Activated naive CD4-positive, alpha-beta T cell treated with anti-CD3 and anti-CD28 coated beads for 36 hours (primary cell): ENCODE measurements at regions of chr14 and their contacts with region 1.

Region 1: GRCh38 chr14:22556990-22557623 is 31.9 kb downstream of the DAD1 start:
- DNase-seq: peak; percentile 95
- H3K4me3 Mint-ChIP-seq: peak overlapping the region; percentile 74
- H3K27ac Mint-ChIP-seq: peak overlapping the region; percentile 97
- H3K4me1 Mint-ChIP-seq: peaks cover 84% of the 10 kb centered on the region
- H3K27me3 Mint-ChIP-seq: no peaks in the 10 kb centered on the region

Region 2: DNA sequence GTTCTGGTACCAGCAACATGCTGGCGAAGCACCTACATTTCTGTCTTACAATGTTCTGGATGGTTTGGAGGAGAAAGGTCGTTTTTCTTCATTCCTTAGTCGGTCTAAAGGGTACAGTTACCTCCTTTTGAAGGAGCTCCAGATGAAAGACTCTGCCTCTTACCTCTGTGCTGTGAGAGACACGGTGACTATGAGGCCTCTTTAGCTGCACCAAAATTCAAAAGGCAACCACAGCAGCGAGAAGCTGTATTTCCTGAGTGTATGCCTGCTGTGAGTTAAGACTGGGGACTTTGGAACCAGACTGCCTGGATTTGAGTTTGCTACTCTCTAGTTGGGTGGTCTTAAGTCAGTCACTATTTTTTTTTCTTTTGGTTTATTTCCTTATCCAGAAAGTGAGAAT is 913.7 kb before region 1 on chr14:
- CTCF ChIA-PET with region 1: interaction called, 3 read pairs
- intact Hi-C with region 1: loop called (anchors 5 kb)
- DNase-seq: no peak
- H3K4me3 Mint-ChIP-seq: peak overlapping the region; percentile 47
- H3K27ac Mint-ChIP-seq: peak overlapping the region; percentile 75
- H3K4me1 Mint-ChIP-seq: peaks cover 3% of the 10 kb centered on the region
- H3K27me3 Mint-ChIP-seq: peaks cover 6% of the 10 kb centered on the region

Region 3: DNA sequence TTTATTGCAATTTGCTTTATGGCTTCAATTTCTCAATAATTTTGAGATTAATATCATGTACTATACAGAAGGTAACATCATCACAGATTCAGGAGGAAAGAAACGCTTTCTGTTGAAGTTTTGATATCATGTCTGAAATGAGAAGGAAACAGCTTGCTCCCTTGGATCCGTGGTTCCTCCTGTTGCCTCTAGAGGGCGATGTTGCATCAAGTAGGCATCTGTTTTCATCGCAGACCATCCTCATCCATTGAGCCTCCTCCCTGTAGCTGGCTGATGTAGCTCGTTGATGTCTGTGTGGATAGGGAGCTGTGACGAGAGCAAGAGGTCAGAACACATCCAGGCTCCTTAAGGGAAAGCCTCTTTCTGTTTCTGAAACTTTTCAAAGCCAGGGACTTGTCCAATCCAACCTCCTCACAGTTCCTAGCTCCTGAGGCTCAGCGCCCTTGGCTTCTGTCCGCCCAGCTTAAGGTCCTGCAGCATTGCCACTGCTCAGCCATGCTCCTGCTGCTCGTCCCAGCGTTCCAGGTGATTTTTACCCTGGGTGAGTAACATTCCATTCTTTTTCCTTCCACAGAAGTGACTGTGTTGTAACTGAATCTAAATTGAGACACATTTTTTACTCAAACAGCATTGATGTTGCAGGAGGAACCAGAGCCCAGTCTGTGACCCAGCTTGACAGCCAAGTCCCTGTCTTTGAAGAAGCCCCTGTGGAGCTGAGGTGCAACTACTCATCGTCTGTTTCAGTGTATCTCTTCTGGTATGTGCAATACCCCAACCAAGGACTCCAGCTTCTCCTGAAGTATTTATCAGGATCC is 578.7 kb before region 1 on chr14:
- CTCF ChIA-PET with region 1: interaction called, 5 read pairs
- intact Hi-C with region 1: loop called (anchors 5 kb)
- DNase-seq: peak; percentile 78
- H3K4me3 Mint-ChIP-seq: peak overlapping the region; percentile 76
- H3K27ac Mint-ChIP-seq: peak overlapping the region; percentile 76
- H3K4me1 Mint-ChIP-seq: peaks cover 26% of the 10 kb centered on the region
- H3K27me3 Mint-ChIP-seq: no peaks in the 10 kb centered on the region

Region 4: GRCh38 chr14:22221508-22221907 is 335.6 kb before region 1 on chr14:
- CTCF ChIA-PET with region 1: interaction called, 3 read pairs
- intact Hi-C with region 1: loop called (anchors 2 kb)
- DNase-seq: no peak
- H3K4me3 Mint-ChIP-seq: peak overlapping the region; percentile 69
- H3K27ac Mint-ChIP-seq: peak overlapping the region; percentile 72
- H3K4me1 Mint-ChIP-seq: peaks cover 7% of the 10 kb centered on the region
- H3K27me3 Mint-ChIP-seq: no peaks in the 10 kb centered on the region

Region 5: DNA sequence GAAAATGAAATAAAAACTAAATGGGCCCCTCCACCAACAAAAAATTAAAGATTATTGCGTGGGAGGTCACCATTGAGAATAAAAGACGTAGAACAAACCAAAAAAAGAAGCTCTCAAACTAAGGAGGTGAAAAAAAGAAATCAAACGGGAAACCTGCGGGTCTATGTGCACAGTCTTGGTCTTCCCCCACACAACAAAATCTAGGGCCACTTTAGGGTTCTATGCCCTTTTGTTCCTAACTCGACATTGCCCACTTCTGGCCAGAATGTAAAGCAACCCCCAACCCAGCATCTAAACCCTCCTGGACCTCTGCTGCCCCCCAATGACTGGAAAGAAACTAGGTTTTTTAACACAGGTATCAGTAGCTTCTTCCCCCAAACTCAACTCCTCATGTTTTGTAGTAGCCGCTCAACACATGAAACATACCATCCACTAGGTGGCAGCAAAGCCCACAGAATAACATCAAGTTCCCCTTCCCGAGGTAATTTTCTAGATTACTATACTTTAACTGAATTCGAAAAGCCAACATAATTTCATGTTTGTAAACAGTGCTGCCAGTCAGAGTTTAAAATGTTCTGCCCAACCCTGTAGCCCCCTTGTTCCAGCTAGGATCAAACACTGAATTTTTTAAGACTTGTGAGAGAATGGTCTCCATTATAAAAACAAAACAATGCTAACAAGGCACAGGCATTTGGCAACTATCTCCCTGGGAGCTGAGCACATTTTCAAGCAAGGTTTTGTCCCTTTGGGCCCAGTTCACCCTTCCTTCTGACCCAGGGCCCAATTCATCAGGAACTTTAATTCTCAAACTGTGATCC is 13.2 kb after region 1 on chr14:
- CTCF ChIA-PET with region 1: interaction called, 149 read pairs
- intact Hi-C with region 1: loop called (anchors 1 kb)
- DNase-seq: peak; percentile 93
- H3K4me3 Mint-ChIP-seq: peak overlapping the region; percentile 85
- H3K27ac Mint-ChIP-seq: peak overlapping the region; percentile 97
- H3K4me1 Mint-ChIP-seq: peaks cover 68% of the 10 kb centered on the region
- H3K27me3 Mint-ChIP-seq: no peaks in the 10 kb centered on the region

Region 6: DNA sequence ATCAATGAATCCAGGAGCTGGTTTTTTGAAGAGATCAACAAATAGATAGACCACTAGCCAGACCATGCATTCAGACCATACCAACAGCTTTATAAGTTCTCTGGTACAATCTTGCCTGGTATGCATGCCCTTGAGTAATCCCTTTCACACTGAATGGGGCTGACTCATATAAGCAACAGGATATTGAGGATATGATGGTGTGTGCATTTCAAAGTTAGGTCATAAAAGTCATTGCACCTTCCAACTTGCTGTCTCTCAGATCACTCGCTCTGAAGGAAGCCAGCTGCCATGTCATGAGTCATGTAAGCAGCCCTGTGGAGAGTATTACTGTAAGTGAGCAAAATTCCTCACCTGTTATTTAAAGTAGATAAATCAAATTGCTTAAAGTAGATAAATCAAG is 132.1 kb after region 1 on chr14:
- CTCF ChIA-PET with region 1: no interaction called
- intact Hi-C with region 1: loop called (anchors 1 kb)
- DNase-seq: peak; percentile 61
- H3K4me3 Mint-ChIP-seq: no peak overlapping the region
- H3K27ac Mint-ChIP-seq: no peak overlapping the region
- H3K4me1 Mint-ChIP-seq: peaks cover 12% of the 10 kb centered on the region
- H3K27me3 Mint-ChIP-seq: peaks cover 18% of the 10 kb centered on the region

Region 7: GRCh38 chr14:22986508-22987054 is 429.5 kb after region 1 on chr14:
- CTCF ChIA-PET with region 1: interaction called, 4 read pairs
- intact Hi-C with region 1: loop called (anchors 1 kb)
- DNase-seq: peak; percentile 97
- H3K4me3 Mint-ChIP-seq: no peak overlapping the region
- H3K27ac Mint-ChIP-seq: no peak overlapping the region
- H3K4me1 Mint-ChIP-seq: no peaks in the 10 kb centered on the region
- H3K27me3 Mint-ChIP-seq: no peaks in the 10 kb centered on the region